ENCODE measurements at regions of chr2 and their contacts with region 1.

Region 1: GRCh38 chr2:149561309-149561926 is 26.2 kb downstream of the MMADHC start:
- DNase-seq: no peak
- H3K4me3 ChIP-seq: no peak overlapping the region
- H3K27ac ChIP-seq: no peak overlapping the region
- H3K4me1 ChIP-seq: peaks cover 2% of the 10 kb centered on the region
- H3K27me3 ChIP-seq: no peaks in the 10 kb centered on the region
- CTCF ChIP-seq: peak in 2 of 3 experiments; percentile 41 to 57

Region 2: GRCh38 chr2:148696985-148697384 is 864.4 kb before region 1 on chr2:
- dilution Hi-C with region 1: no loop called
- DNase-seq: no peak
- H3K4me3 ChIP-seq: no peak overlapping the region
- H3K27ac ChIP-seq: no peak overlapping the region
- H3K4me1 ChIP-seq: no peaks in the 10 kb centered on the region
- H3K27me3 ChIP-seq: no peaks in the 10 kb centered on the region
- CTCF ChIP-seq: no peak

Region 3: GRCh38 chr2:149020432-149020851 is 541.0 kb before region 1 on chr2:
- dilution Hi-C with region 1: loop called (anchors 10 kb)
- DNase-seq: no peak
- H3K4me3 ChIP-seq: no peak overlapping the region
- H3K27ac ChIP-seq: no peak overlapping the region
- H3K4me1 ChIP-seq: no peaks in the 10 kb centered on the region
- H3K27me3 ChIP-seq: peaks cover 4% of the 10 kb centered on the region
- CTCF ChIP-seq: no peak

Region 4: DNA sequence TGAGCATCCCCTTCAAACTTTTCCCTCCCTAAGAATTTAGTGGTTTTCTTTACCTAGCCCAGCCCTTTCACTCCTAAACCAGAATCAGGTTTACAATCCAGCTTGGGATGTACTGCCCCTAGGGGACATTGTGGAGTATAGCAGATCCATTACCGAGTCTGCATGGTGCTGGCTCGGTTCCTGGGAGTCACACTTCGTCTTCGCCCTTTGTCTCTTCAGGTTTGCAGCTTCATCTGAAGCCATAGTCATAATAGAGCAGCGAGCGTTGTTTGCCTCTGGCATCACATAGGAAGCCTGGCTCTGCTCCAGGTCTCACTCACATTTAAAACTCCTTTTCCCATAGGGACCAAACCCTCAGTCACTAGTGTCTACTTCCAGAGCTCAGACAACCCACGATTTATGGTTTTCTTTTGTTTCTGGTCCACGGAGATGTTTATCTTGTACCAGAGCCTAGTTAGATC is 247.9 kb before region 1 on chr2:
- dilution Hi-C with region 1: no loop called
- DNase-seq: peak; percentile 19
- H3K4me3 ChIP-seq: no peak overlapping the region
- H3K27ac ChIP-seq: no peak overlapping the region
- H3K4me1 ChIP-seq: peaks cover 8% of the 10 kb centered on the region
- H3K27me3 ChIP-seq: no peaks in the 10 kb centered on the region
- CTCF ChIP-seq: peak; percentile 81 to 93 (median 86)